KBM-7 (cell line): ENCODE measurements at regions of chr2 and their contacts with region 1.

Region 1: GRCh38 chr2:224369028-224369632 is 32.8 kb downstream of the FAM124B start:
- DNase-seq: peak; percentile 56

Region 2: GRCh38 chr2:224646242-224646846 is 277.2 kb after region 1 on chr2:
- in situ Hi-C with region 1: loop called (anchors 10 kb)
- DNase-seq: peak; percentile 65